BJ (cell line): ENCODE measurements at regions of chr17 and their contacts with region 1.

Region 1: GRCh38 chr17:74790161-74791054 is 14.3 kb upstream of the NAT9 start:
- DNase-seq: no peak
- H3K4me3 ChIP-seq: no peak overlapping the region
- H3K27me3 ChIP-seq: no peaks in the 10 kb centered on the region
- CTCF ChIP-seq: no peak

Region 2: DNA sequence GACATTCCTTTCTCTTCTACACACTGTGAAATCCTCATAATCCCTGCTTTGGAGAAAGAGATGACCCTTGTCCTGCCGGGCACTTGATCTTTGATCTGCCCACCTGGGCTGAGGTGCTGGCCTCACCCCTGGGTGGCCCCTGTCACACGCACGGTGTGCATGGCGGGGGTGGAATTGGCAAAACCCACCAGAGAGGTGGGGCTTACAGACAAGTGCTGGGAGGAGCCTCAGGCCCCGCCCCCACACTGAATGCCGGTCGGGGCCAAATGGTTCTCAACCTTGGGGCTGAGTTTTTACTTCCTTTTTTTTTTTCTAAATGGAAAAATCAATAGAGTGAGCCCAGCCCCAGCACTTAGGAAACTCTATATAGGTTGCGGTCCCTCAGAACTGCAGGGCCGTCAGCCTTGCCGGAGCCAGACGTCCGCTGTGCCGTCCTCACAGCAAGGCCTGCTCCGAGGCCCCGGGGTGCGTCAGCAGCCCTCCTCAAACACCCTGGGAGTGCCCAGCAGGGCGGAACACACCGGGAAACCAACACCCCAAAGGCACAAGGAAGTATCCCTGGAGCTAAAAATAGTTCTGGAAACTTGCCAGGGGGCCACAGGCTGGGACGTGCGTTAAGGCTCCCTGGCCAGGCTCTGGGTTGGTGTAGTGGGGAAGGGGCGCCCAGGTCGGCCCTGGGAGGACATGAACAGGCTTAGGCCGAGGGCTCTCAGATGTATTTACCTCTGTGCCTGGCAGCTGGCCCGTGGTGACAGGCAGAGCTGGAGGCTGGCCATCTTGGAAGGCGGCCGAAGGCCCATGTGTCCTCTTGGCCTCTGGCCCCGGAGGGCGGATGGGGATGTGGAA is 347.5 kb before region 1 on chr17:
- CTCF ChIA-PET with region 1: no interaction called
- POLR2A ChIA-PET with region 1: no interaction called
- DNase-seq: no peak
- H3K4me3 ChIP-seq: no peak overlapping the region
- H3K27me3 ChIP-seq: no peaks in the 10 kb centered on the region
- CTCF ChIP-seq: no peak

Region 3: DNA sequence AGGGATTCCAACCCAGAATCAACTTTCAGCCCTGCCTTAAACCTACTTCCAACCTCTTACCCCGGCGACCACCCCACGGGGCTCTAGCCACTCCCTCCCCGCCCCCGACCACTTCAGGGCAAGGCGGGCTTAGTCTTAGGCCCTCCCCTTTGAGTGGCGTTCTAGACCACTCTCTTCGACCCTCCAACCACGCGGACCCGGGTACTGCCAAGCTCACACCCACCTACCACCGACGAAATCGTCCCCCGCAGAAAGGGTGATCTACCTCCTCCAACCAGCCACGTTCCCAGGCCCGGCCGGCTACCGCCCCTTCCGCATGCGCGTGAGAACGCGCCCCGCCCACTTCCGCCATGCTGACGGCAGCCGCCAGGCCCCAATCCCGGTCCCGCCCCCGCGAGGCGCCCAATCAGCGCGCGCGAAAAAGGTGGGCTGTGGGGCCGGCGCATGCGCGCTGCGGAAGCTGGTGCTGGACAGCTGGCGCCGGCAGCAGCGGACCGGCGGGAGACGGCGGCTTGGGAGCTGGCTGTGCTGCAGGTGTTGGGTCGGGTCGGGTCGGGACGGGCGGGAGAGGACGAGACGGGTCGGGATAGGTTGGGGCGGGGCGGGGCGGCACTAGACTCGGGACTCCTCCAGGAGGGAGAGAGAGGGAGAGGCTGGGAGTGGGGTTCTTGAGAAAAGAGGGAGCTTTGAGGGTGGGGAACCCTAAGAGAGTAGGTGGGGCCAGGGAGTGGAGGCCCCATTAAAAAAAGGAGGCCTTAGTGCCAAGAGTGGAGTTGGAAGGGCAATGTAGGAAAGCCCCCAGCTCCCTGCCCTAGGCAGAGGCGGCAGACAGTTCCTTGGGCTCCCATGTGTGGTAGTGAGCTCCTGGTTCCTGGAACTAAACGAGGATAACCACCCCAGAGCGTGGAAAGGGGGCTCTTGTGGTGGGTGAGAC is 14.1 kb before region 1 on chr17 and contains the start of gene NAT9:
- CTCF ChIA-PET with region 1: interaction called, 15 read pairs
- POLR2A ChIA-PET with region 1: no interaction called
- DNase-seq: peak; percentile 66
- H3K4me3 ChIP-seq: peak within 1 kb of the TSS; percentile 84
- H3K27me3 ChIP-seq: no peaks in the 10 kb centered on the region
- CTCF ChIP-seq: no peak
- polyA plus RNA-seq, gene NAT9: 39.5 and 50.6 TPM in 2 replicates

Region 4: DNA sequence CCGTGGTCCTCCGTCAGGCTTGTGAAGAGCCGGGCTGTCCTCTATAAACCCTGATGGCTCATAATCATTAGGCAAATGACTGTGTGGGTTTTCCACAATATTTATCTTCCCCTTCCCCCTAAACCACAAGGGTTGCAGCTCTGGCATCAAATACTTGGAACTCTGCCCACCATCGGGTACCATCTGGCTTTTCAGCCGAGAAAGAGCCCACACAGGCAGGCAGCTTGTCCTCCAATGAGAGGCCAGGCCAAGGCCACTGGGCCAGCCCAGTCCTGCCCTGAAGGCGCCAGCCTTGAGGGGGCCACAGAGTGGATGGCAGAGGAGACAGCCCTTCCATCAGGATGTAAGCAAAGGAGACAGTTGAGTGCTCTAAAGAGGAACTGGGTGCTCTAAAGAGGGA is 17.5 kb after region 1 on chr17:
- CTCF ChIA-PET with region 1: interaction called, 10 read pairs
- POLR2A ChIA-PET with region 1: no interaction called
- DNase-seq: no peak
- H3K4me3 ChIP-seq: no peak overlapping the region
- H3K27me3 ChIP-seq: no peaks in the 10 kb centered on the region
- CTCF ChIP-seq: no peak

Region 5: GRCh38 chr17:74821655-74822334 is 31.4 kb after region 1 on chr17:
- CTCF ChIA-PET with region 1: no interaction called
- POLR2A ChIA-PET with region 1: no interaction called
- DNase-seq: no peak
- H3K4me3 ChIP-seq: no peak overlapping the region
- H3K27me3 ChIP-seq: no peaks in the 10 kb centered on the region
- CTCF ChIP-seq: no peak

Region 6: DNA sequence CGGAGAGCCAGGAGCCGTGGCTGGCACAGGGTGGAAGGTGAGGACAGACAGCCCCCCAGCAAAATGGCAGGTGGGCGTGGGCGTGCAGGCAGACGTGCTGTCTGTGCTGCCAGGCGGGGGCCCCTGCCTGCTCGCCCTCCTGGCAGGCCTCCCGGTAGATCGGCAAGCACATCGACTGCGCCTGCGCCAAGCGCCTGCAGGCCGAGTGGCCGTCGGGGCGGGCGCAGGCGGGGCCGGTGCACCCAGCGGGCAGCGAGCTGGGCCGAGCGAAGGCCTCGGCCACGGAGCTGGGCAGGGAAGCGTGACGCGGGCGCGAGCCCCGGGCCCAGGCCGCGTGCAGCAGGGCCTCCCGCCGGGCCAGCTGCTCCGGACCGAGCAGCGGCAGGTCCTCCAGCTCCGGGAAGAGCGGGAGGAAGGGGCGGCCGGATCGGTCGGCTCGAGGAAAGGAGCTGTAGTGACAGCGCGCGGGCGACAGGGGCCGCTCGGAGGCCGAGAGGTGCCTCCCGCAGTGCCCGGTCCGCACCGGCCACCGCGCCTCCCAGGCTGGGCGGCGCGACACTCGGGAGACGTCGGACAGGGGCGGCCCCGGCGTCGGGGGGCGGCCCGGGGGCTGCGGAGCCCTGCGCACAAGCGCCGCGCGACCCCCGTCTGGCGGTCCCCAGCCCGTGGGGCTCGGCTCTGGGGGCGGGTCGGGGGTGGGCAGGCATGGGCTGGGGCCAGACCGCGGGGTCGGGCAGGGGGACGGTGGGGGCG is 52.4 kb after region 1 on chr17:
- CTCF ChIA-PET with region 1: interaction called, 11 read pairs
- POLR2A ChIA-PET with region 1: no interaction called
- DNase-seq: no peak
- H3K4me3 ChIP-seq: peak overlapping the region; percentile 34
- H3K27me3 ChIP-seq: no peaks in the 10 kb centered on the region
- CTCF ChIP-seq: peak; percentile 40

Region 7: GRCh38 chr17:74883041-74883745 is 92.8 kb after region 1 on chr17:
- CTCF ChIA-PET with region 1: no interaction called
- POLR2A ChIA-PET with region 1: no interaction called
- DNase-seq: no peak
- H3K4me3 ChIP-seq: no peak overlapping the region
- H3K27me3 ChIP-seq: peaks cover 18% of the 10 kb centered on the region
- CTCF ChIP-seq: no peak

Region 8: GRCh38 chr17:75639771-75640316 is 849.4 kb after region 1 on chr17:
- CTCF ChIA-PET with region 1: no interaction called
- POLR2A ChIA-PET with region 1: no interaction called
- DNase-seq: no peak
- H3K4me3 ChIP-seq: no peak overlapping the region
- H3K27me3 ChIP-seq: no peaks in the 10 kb centered on the region
- CTCF ChIP-seq: no peak